Esophagus muscularis mucosa (tissue), 4 donors: ENCODE measurements at regions of chr4 and their contacts with region 1.

Region 1: GRCh38 chr4:54322818-54323417 is 93.8 kb downstream of the PDGFRA start:
- DNase-seq: no peak
- H3K4me3 ChIP-seq: no peak overlapping the region
- H3K27ac ChIP-seq: no peak overlapping the region
- H3K4me1 ChIP-seq: peaks cover 0 to 6% (median 3%) of the 10 kb centered on the region in 4 donors
- H3K27me3 ChIP-seq: no peaks in the 10 kb centered on the region
- CTCF ChIP-seq: peak; percentile 67 to 79 (median 72)
- EP300 ChIP-seq: no peak
- POLR2A ChIP-seq: no peak

Region 2: GRCh38 chr4:54440394-54441136 is 117.6 kb after region 1 on chr4:
- intact Hi-C with region 1: loop called (anchors 2 kb)
- DNase-seq: no peak
- H3K4me3 ChIP-seq: peak overlapping the region; percentile 11 to 19 (median 14)
- H3K27ac ChIP-seq: peak overlapping the region in 3 of 4 donors; percentile 2 to 43 (median 9)
- H3K4me1 ChIP-seq: peaks cover 4 to 6% (median 5%) of the 10 kb centered on the region in 4 donors
- H3K27me3 ChIP-seq: no peaks in the 10 kb centered on the region
- CTCF ChIP-seq: peak; percentile 69 to 77 (median 74)
- EP300 ChIP-seq: no peak
- POLR2A ChIP-seq: no peak

Region 3: DNA sequence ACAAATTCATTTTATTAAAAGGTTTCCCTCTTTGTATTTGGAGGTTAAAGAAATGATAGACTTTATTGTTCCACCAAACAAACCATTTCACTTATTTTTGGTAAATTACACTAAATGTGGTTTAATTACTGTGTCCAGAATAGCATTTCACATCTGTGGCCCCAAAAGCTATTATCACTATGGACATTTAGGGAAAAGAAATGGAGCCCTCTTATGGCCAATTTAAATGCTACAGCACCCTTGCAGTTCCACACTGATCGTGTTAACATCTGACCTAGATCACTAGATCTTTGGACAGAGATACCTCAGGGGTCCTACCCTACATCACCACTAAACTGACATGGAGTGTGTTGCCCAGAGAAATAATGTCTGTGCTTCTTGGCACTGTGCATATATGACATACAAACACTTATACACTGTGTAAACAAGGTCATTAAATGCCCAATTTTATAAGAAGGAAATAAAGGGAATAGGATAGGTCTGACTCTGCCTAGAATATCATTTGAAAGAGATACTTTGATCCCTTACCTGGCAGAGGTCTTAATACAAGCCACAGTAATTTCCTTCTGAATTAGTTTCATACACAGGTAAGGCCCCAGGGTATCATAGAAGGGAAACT is 638.5 kb after region 1 on chr4:
- intact Hi-C with region 1: loop called (anchors 5 kb)
- DNase-seq: no peak
- H3K4me3 ChIP-seq: no peak overlapping the region
- H3K27ac ChIP-seq: no peak overlapping the region
- H3K4me1 ChIP-seq: peaks cover 0 to 28% (median 17%) of the 10 kb centered on the region in 4 donors
- H3K27me3 ChIP-seq: no peaks in the 10 kb centered on the region
- CTCF ChIP-seq: peak; percentile 50 to 70 (median 57)
- EP300 ChIP-seq: no peak
- POLR2A ChIP-seq: no peak